Activated naive CD4-positive, alpha-beta T cell treated with anti-CD3 and anti-CD28 coated beads for 36 hours (primary cell): ENCODE measurements at regions of chr13 and their contacts with region 1.

Region 1: GRCh38 chr13:113275387-113275786 is 21.7 kb upstream of the LAMP1 start:
- DNase-seq: peak; percentile 55
- H3K4me3 Mint-ChIP-seq: no peak overlapping the region
- H3K27ac Mint-ChIP-seq: no peak overlapping the region
- H3K4me1 Mint-ChIP-seq: peaks cover 4% of the 10 kb centered on the region
- H3K27me3 Mint-ChIP-seq: peaks cover 1% of the 10 kb centered on the region

Region 2: DNA sequence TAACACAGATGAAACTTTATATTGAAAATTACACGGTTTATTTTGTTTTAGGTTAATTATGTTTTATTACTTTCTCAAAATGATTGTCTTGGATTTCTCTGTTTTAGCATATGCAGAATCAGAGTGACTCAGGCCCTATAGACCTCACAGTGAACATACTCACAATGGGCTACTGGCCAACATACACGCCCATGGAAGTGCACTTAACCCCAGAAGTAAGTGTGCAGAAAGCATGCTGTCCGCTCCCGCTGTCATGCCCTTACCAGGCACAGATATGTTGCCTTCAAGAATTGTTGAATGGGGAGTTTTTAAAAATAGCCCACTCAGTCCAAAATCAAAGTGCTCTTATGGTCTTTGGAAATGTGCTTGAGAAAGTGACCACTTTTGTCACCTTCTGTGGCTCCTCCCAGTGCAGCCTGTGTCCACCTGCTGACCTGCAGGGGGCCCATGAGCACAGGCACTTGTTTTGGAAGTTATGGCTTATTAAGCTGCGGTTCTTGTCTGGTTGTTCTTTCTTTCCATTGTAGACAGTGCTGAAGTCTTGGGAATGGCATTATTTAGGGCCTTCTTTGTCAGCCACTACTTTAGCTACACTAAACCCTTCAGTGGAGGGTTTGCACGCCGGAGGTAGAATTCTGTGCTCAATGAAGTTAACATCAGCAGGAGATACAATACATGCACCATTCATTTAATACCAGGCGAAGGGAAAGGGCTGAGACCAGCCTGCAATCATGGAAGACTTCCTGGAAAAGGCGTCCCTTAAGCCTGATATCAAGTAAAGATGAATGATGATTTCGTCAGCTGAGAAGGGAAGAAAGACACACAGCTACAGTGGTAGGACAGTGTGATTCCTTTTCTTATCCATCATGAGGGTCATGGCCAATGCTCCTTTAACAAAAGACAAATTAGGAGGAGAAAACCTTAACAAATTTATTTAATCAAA is 29.3 kb before region 1 on chr13:
- CTCF ChIA-PET with region 1: no interaction called
- intact Hi-C with region 1: no loop called
- DNase-seq: no peak
- H3K4me3 Mint-ChIP-seq: no peak overlapping the region
- H3K27ac Mint-ChIP-seq: no peak overlapping the region
- H3K4me1 Mint-ChIP-seq: no peaks in the 10 kb centered on the region
- H3K27me3 Mint-ChIP-seq: no peaks in the 10 kb centered on the region

Region 3: GRCh38 chr13:113393563-113394338 is 118.4 kb after region 1 on chr13:
- CTCF ChIA-PET with region 1: interaction called, 9 read pairs
- intact Hi-C with region 1: loop called (anchors 1 kb)
- DNase-seq: peak; percentile 86
- H3K4me3 Mint-ChIP-seq: peak overlapping the region; percentile 85
- H3K27ac Mint-ChIP-seq: peak overlapping the region; percentile 46
- H3K4me1 Mint-ChIP-seq: peaks cover 4% of the 10 kb centered on the region
- H3K27me3 Mint-ChIP-seq: no peaks in the 10 kb centered on the region

Region 4: GRCh38 chr13:113398963-113399661 is 123.7 kb after region 1 on chr13:
- CTCF ChIA-PET with region 1: interaction called, 9 read pairs
- intact Hi-C with region 1: loop called (anchors 1 kb)
- DNase-seq: no peak
- H3K4me3 Mint-ChIP-seq: no peak overlapping the region
- H3K27ac Mint-ChIP-seq: no peak overlapping the region
- H3K4me1 Mint-ChIP-seq: no peaks in the 10 kb centered on the region
- H3K27me3 Mint-ChIP-seq: no peaks in the 10 kb centered on the region

Region 5: GRCh38 chr13:113562085-113562749 is 286.8 kb after region 1 on chr13:
- CTCF ChIA-PET with region 1: no interaction called
- intact Hi-C with region 1: loop called (anchors 1 kb)
- DNase-seq: peak; percentile 70
- H3K4me3 Mint-ChIP-seq: no peak overlapping the region
- H3K27ac Mint-ChIP-seq: no peak overlapping the region
- H3K4me1 Mint-ChIP-seq: peaks cover 4% of the 10 kb centered on the region
- H3K27me3 Mint-ChIP-seq: peaks cover 2% of the 10 kb centered on the region